Left colon (tissue), 2 donors: ENCODE measurements at regions of chr18 and their contacts with region 1.

Region 1: DNA sequence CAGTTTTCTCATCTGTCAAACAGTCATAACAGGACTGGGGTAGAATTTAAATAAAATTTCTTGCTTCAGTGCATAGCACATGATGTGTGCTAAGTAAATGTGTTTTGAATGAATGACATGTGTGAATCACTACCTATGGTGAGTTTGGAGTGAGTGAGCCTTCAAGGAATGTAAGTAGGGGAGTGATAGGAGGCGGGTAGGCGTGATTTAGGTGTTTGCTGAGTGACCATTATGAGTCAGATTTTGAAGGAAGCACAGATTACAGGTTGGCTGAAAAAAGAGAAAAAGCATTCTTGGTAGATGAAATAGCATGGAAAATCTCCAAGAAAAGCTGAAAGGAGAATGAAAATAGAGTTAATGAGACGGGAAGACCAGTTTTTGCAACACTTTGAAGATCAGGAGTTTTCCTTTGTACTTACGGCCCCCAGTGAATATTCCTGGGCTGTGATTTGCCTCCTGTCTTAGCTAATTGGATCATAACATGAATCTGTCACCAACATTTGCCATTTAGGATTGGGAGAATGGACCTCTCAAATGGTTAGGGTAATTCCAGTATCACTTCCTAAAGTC is 136.9 kb upstream of the GATA6 start:
- DNase-seq: no peak
- ATAC-seq: peak; percentile 92

Region 2: DNA sequence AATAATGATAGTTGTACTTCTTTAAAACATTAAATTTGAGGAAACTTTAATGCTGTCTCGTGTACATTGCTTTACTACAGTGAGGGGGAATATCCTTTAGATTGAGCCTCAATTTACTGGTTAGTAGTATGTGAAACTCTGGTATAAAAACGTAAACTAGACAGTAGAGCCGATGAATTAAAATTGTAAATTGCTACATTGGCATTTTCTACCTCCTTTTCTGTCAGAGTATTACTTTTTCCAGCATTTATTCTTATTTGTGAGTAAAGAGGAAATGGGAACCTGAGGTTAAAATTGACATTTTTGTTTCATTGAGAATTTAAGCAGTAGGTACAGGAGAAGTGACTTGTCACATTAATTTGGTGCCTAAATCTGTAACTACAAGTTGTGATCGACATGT is 163.7 kb before region 1 on chr18:
- intact Hi-C with region 1: no loop called
- DNase-seq: no peak
- ATAC-seq: no peak

Region 3: DNA sequence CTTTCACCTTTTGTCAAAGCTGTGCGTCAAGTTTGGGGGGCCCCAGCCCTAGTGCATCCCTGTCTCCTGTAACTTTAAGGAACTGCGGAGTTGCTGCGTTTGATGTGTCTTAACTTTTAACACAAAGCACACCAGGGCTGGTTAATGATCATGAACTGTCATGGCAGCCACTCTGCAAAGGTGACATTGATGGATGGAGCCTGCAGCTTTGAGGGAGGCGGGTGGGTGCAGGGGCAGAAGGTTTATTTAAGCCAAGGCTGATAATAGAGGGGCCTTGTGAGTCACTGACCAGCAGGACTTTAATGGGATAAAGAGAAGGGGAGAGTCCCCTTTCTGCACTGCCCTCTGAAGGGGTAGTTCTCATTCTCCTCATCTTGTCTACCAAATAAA is 53.3 kb before region 1 on chr18:
- intact Hi-C with region 1: no loop called
- DNase-seq: no peak
- ATAC-seq: no peak

Region 4: GRCh38 chr18:22084547-22084946 is 52.1 kb after region 1 on chr18:
- intact Hi-C with region 1: loop called in 1 of 2 experiments (anchors 10 kb)
- DNase-seq: peak; percentile 70 to 79
- ATAC-seq: peak; percentile 93

Region 5: GRCh38 chr18:22102953-22103646 is 70.6 kb after region 1 on chr18:
- intact Hi-C with region 1: no loop called
- DNase-seq: no peak
- ATAC-seq: peak; percentile 76

Region 6: DNA sequence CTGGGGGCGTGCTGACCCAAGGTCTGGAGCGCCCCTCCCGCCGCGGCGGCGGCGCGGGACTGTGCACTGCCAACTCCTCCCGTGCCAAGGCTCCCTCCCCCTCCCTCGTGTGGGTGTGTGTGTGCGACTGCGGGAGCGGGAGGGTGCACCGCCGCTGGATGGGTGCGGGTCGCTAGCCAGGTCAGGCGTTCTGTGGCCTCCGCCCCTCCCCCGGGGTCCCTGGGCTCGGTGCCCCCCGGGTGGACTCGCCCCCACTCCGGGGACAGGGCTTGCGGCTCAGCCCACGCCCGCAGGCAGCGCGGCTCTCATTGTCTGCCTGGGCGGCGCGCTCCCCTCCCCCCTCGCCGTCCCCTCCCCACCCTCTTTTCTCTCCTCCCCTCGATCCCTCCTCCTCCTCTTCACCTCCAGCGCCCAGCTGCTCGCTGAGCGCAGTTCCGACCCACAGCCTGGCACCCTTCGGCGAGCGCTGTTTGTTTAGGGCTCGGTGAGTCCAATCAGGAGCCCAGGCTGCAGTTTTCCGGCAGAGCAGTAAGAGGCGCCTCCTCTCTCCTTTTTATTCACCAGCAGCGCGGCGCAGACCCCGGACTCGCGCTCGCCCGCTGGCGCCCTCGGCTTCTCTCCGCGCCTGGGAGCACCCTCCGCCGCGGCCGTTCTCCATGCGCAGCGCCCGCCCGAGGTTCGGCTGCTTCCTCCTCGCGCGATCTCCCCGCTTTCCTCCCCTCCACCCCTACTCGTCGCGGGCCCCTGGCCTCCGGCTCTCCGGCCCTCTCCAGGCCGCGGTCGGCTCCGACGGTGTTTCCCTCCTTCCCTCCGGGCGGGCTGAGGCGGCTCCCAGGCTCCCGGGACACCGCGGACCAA is 136.8 kb after region 1 on chr18 and contains the start of gene GATA6:
- intact Hi-C with region 1: no loop called
- DNase-seq: peak; percentile 89 to 94
- ATAC-seq: peak; percentile 71
- total RNA-seq, gene GATA6: 46.1 to 57.8 TPM